Esophagus squamous epithelium (tissue), 5 donors: ENCODE measurements at regions of chr5 and their contacts with region 1.

Region 1: DNA sequence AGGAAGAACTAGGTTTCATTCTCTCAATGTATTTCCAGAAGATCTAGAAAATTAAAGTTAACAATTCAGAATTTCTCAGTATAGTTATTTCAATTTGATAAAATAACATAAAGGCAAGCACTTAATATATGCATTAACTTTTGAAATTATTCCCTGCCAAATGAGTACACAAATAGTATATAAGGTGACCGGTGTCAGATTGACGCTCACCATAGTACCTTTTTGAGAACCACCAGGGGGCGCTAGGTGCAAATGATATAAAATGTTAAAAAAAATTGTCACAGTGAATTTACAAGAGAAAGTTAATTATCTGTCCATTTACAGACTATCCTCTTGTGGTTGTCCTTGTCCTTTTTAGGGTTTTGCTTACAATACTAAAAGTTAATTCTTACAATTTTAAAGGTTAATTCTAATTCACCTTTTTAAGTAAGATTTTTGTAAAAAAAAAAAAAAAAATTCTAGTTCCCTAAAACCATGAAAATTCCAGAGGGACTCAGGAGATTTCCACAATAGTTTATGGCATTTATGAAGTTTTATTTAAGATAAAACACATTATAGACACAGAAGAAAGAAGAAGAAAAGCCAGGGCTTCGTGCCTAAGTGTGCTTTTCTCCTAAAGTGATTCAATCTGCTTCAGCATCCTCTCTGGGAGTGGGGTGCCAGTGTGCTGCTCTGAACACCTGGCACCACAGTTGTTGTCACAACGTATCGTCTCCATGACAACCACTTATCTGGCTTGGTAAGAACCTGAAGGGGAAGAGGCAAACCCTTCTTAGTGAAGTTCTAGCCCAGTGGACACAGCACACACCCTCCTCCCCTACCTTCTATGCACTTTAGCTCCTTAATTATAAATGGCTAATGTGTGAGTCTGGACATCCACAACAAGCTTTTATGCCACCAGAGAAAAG is 1.7 kb downstream of the ADAMTS16 start:
- DNase-seq: no peak
- H3K4me3 ChIP-seq: no peak overlapping the region
- H3K27ac ChIP-seq: no peak overlapping the region
- H3K4me1 ChIP-seq: peaks cover 9 to 22% (median 10%) of the 10 kb centered on the region in 3 donors
- H3K27me3 ChIP-seq: peaks cover 0 to 49% (median 10%) of the 10 kb centered on the region in 4 donors
- CTCF ChIP-seq: peak; percentile 45 to 86 (median 72)
- POLR2A ChIP-seq: no peak

Region 2: GRCh38 chr5:4905674-4906520 is 236.0 kb before region 1 on chr5:
- intact Hi-C with region 1: no loop called
- DNase-seq: no peak
- H3K4me3 ChIP-seq: no peak overlapping the region
- H3K27ac ChIP-seq: no peak overlapping the region
- H3K4me1 ChIP-seq: peaks cover 0 to 9% (median 0%) of the 10 kb centered on the region in 3 donors
- H3K27me3 ChIP-seq: no peaks in the 10 kb centered on the region
- CTCF ChIP-seq: no peak
- POLR2A ChIP-seq: no peak

Region 3: GRCh38 chr5:4929092-4929655 is 212.7 kb before region 1 on chr5:
- intact Hi-C with region 1: no loop called
- DNase-seq: no peak
- H3K4me3 ChIP-seq: no peak overlapping the region
- H3K27ac ChIP-seq: no peak overlapping the region
- H3K4me1 ChIP-seq: no peaks in the 10 kb centered on the region
- H3K27me3 ChIP-seq: no peaks in the 10 kb centered on the region
- CTCF ChIP-seq: no peak
- POLR2A ChIP-seq: no peak

Region 4: GRCh38 chr5:5398046-5398445 is 256.2 kb after region 1 on chr5:
- intact Hi-C with region 1: loop called (anchors 5 kb)
- DNase-seq: no peak
- H3K4me3 ChIP-seq: no peak overlapping the region
- H3K27ac ChIP-seq: no peak overlapping the region
- H3K4me1 ChIP-seq: no peaks in the 10 kb centered on the region
- H3K27me3 ChIP-seq: no peaks in the 10 kb centered on the region
- CTCF ChIP-seq: no peak
- POLR2A ChIP-seq: no peak

Region 5: GRCh38 chr5:5419294-5420210 is 277.7 kb after region 1 on chr5:
- intact Hi-C with region 1: loop called (anchors 5 kb)
- DNase-seq: no peak
- H3K4me3 ChIP-seq: no peak overlapping the region
- H3K27ac ChIP-seq: no peak overlapping the region
- H3K4me1 ChIP-seq: peaks cover 16 to 35% (median 19%) of the 10 kb centered on the region in 3 donors
- H3K27me3 ChIP-seq: no peaks in the 10 kb centered on the region
- CTCF ChIP-seq: peak; percentile 50 to 78 (median 66)
- POLR2A ChIP-seq: no peak